ENCODE measurements at regions of chr13 and their contacts with region 1.

Region 1: GRCh38 chr13:77026818-77027585 is at the start of gene FBXL3:
- DNase-seq: peak; percentile 75 to 78
- H3K4me3 ChIP-seq: peak within 1 kb of the TSS; percentile 95
- H3K27ac ChIP-seq: peak within 1 kb of the TSS; percentile 89
- H3K4me1 ChIP-seq: peaks cover 45% of the 10 kb centered on the region
- H3K27me3 ChIP-seq: no peaks in the 10 kb centered on the region
- CTCF ChIP-seq: no peak
- total RNA-seq, gene FBXL3: 20.3 and 22.0 TPM in 2 replicates

Region 2: DNA sequence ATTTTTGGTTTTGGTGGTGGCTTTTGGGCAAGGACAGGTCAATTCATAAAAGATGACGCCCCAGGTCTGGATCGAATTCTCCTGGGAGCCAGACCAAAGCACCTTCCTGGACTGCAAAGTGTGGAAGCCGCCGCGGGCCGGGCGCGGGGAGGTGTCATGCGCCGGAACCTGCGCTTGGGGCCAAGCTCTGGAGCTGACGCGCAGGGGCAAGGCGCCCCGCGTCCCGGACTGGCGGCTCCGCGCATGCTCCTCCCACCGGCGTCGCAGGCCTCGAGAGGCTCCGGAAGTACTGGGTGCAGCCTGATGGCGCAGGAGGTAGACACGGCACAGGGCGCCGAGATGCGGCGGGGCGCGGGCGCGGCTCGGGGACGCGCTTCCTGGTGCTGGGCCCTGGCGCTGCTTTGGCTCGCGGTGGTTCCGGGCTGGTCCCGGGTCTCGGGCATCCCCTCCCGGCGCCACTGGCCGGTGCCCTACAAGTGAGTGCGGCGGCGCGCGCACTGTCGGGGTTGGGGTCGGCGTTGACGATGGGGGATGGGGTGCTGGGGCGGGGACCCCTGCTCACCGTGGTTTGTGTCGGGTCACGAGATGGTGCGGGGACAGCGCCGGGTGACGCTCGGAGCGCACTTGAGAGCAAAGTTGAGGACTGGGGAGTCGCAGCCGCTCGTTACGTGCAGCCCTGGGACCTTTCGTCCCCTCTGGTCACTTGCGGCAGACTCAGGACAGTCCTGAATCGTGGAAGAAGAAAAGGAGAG is 35.0 kb before region 1 on chr13 and contains the start of gene CLN5:
- CTCF ChIA-PET with region 1: no interaction called
- POLR2A ChIA-PET with region 1: interaction called, 4 read pairs
- intact Hi-C with region 1: loop called (anchors 2 kb)
- DNase-seq: peak; percentile 83 to 93
- H3K4me3 ChIP-seq: peak within 1 kb of the TSS; percentile 70
- H3K27ac ChIP-seq: peak within 1 kb of the TSS; percentile 53
- H3K4me1 ChIP-seq: peaks cover 9% of the 10 kb centered on the region; the same call in 1 of the 2 replicates
- H3K27me3 ChIP-seq: 0 out of 2 replicates have a peak, but pooled peaks cover 3% of the 10 kb centered on the region
- CTCF ChIP-seq: no peak
- total RNA-seq, gene CLN5: 9.2 and 10.7 TPM in 2 replicates

Region 3: GRCh38 chr13:77425705-77426104 is 398.7 kb after region 1 on chr13:
- CTCF ChIA-PET with region 1: no interaction called
- POLR2A ChIA-PET with region 1: no interaction called
- intact Hi-C with region 1: no loop called
- DNase-seq: no peak
- H3K4me3 ChIP-seq: no peak overlapping the region
- H3K27ac ChIP-seq: no peak overlapping the region
- H3K4me1 ChIP-seq: peaks cover 20% of the 10 kb centered on the region
- H3K27me3 ChIP-seq: no peaks in the 10 kb centered on the region
- CTCF ChIP-seq: no peak

Region 4: GRCh38 chr13:77460195-77460594 is 433.2 kb after region 1 on chr13:
- CTCF ChIA-PET with region 1: no interaction called
- POLR2A ChIA-PET with region 1: no interaction called
- intact Hi-C with region 1: no loop called
- DNase-seq: no peak
- H3K4me3 ChIP-seq: no peak overlapping the region
- H3K27ac ChIP-seq: no peak overlapping the region
- H3K4me1 ChIP-seq: no peaks in the 10 kb centered on the region
- H3K27me3 ChIP-seq: no peaks in the 10 kb centered on the region
- CTCF ChIP-seq: no peak

Region 5: GRCh38 chr13:77480066-77480465 is 453.1 kb after region 1 on chr13:
- CTCF ChIA-PET with region 1: no interaction called
- POLR2A ChIA-PET with region 1: no interaction called
- intact Hi-C with region 1: loop called (anchors 10 kb)
- DNase-seq: no peak
- H3K4me3 ChIP-seq: no peak overlapping the region
- H3K27ac ChIP-seq: no peak overlapping the region
- H3K4me1 ChIP-seq: peaks cover 11% of the 10 kb centered on the region
- H3K27me3 ChIP-seq: no peaks in the 10 kb centered on the region
- CTCF ChIP-seq: no peak

Region 6: GRCh38 chr13:77535448-77535847 is 508.4 kb after region 1 on chr13 and contains the start of gene SCEL:
- CTCF ChIA-PET with region 1: no interaction called
- POLR2A ChIA-PET with region 1: interaction called, 12 read pairs
- intact Hi-C with region 1: no loop called
- DNase-seq: peak; percentile 65 to 93
- H3K4me3 ChIP-seq: peak within 1 kb of the TSS; percentile 61
- H3K27ac ChIP-seq: peak within 1 kb of the TSS; percentile 92
- H3K4me1 ChIP-seq: peaks cover 61% of the 10 kb centered on the region
- H3K27me3 ChIP-seq: no peaks in the 10 kb centered on the region
- CTCF ChIP-seq: no peak
- total RNA-seq, gene SCEL: 19.5 and 32.5 TPM in 2 replicates

Measured in PC-9 (cell line).